ENCODE measurements at regions of chr11 and their contacts with region 1.

Region 1: DNA sequence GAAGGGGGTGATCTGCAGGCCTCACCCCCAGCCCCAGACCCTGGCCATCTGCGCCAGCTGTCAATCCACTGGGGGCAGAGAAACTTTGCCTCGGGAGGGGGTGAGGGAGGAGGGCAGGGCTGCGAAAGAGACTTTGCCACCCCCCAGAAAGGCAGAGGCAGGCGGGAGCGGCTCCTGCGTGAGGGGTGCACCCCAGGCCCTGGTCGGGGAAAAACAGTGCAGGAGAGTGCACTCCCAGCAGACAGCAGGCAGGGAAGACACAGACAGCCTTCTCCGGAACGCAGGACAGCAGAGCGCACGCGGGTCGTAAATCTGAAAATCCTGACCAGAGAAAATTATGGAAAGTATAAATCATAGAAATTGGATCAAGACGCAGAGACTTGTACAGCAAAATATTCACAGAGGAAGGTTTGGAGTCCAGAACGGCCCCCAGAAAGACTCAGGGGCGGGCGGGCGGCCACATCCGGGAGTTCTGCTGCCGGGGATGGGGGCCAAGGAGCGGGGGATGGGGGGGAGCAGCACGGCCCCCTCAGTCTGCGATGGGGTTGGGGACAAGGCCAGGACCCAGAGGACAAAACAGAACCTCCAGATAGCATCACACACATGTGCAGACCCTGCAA is 8.0 kb upstream of the MRPL23 start:
- DNase-seq: peak; percentile 49
- ATAC-seq: peak; percentile 76
- H3K4me3 Mint-ChIP-seq: no peak overlapping the region
- H3K27ac Mint-ChIP-seq: no peak overlapping the region
- H3K4me1 Mint-ChIP-seq: peaks cover 12% of the 10 kb centered on the region
- H3K27me3 Mint-ChIP-seq: no peaks in the 10 kb centered on the region
- CTCF ChIP-seq: no peak

Region 2: GRCh38 chr11:1896923-1897322 is 42.2 kb before region 1 on chr11:
- CTCF ChIA-PET with region 1: no interaction called
- POLR2A ChIA-PET with region 1: no interaction called
- intact Hi-C with region 1: loop called (anchors 5 kb)
- DNase-seq: no peak
- ATAC-seq: no peak
- H3K4me3 Mint-ChIP-seq: peak overlapping the region; percentile 36
- H3K27ac Mint-ChIP-seq: no peak overlapping the region
- H3K4me1 Mint-ChIP-seq: peaks cover 20% of the 10 kb centered on the region
- H3K27me3 Mint-ChIP-seq: peaks cover 15% of the 10 kb centered on the region
- CTCF ChIP-seq: no peak

Region 3: DNA sequence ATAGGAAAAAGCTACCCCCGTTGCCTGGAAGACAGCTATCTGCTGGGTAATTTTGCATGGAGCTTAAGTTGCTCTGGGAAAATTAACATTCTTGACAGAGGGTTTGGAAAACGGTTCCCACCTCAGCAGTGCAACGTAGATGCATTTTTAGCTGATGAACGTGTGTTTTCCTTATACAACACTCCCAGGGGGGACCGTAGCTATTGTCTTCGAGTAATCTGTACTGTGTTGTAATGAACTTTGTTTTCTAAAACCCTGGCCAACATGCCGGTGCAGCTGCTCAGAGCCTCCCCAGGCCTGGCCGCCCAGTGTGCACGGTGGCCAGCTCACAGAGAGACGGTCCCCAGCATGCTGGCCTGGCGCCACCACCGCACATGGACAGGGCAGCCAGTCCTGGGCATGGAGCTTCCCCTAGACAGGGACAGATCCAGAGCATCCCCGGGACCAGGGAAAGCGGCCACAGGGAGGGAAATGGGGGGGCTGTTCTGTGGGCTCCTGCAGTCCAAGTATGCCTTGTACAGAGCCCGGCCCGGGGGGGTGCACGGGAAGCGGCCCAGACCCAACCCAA is 17.5 kb before region 1 on chr11:
- CTCF ChIA-PET with region 1: no interaction called
- POLR2A ChIA-PET with region 1: no interaction called
- intact Hi-C with region 1: no loop called
- DNase-seq: no peak
- ATAC-seq: no peak
- H3K4me3 Mint-ChIP-seq: no peak overlapping the region
- H3K27ac Mint-ChIP-seq: no peak overlapping the region
- H3K4me1 Mint-ChIP-seq: peaks cover 4% of the 10 kb centered on the region
- H3K27me3 Mint-ChIP-seq: no peaks in the 10 kb centered on the region
- CTCF ChIP-seq: no peak

Region 4: GRCh38 chr11:1953489-1954266 is 14.6 kb after region 1 on chr11:
- CTCF ChIA-PET with region 1: no interaction called
- POLR2A ChIA-PET with region 1: no interaction called
- intact Hi-C with region 1: no loop called
- DNase-seq: peak; percentile 30
- ATAC-seq: peak; percentile 91
- H3K4me3 Mint-ChIP-seq: no peak overlapping the region
- H3K27ac Mint-ChIP-seq: no peak overlapping the region
- H3K4me1 Mint-ChIP-seq: no peaks in the 10 kb centered on the region
- H3K27me3 Mint-ChIP-seq: no peaks in the 10 kb centered on the region
- CTCF ChIP-seq: no peak

Measured in activated CD8-positive, alpha-beta T cell treated with anti-CD3 and anti-CD28 coated beads for 36 hours (primary cell).